ENCODE measurements at regions of chr21 and their contacts with region 1.

Region 1: GRCh38 chr21:42258153-42258884 is 39.4 kb downstream of the ABCG1 start:
- DNase-seq: peak; percentile 67 to 88 (median 88)
- ATAC-seq: peak; percentile 27 to 39
- H3K4me3 ChIP-seq: no peak overlapping the region
- H3K27ac ChIP-seq: no peak overlapping the region
- H3K4me1 ChIP-seq: peaks cover 2% of the 10 kb centered on the region
- H3K27me3 ChIP-seq: no peaks in the 10 kb centered on the region

Region 2: DNA sequence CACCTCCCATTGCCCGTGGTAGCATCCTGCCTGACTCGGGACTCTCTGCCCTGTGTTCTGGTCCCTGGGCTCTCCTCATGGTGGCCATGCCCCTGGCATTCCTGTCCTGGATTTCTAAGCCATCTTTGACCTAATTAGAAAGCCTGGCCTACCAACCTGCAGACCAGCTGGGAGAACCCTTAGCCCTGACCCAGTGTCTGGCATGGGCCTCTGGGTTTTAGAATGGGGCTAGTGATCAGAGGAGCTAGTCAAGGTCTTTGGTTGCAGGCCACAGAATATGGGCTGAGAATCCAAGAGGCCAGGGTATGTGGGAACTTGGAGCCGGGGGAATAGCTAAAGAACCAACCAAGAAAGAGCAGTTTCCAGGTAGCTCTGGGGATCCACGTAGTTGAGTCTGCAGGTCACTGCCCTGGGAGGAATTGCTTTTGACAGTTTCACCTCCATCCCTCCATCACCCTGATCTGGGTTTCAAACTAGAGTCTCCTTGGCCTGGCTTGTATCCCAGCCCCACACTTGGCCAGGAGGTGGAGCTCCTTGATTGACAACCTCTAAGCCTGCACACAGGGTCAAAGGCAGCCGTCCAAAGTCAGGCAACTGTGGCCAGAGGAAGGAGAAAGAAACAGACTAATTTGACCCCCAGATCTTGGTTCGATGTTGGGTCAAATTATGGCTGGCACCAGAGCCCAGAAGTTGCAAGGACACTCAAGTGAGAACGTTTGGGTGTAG is 94.1 kb before region 1 on chr21:
- intact Hi-C with region 1: loop called in 2 of 4 experiments (anchors 10 kb)
- DNase-seq: peak; percentile 56 to 79 (median 77)
- ATAC-seq: peak; percentile 68 to 76
- H3K4me3 ChIP-seq: no peak overlapping the region
- H3K27ac ChIP-seq: no peak overlapping the region
- H3K4me1 ChIP-seq: no peaks in the 10 kb centered on the region
- H3K27me3 ChIP-seq: no peaks in the 10 kb centered on the region

Region 3: GRCh38 chr21:42187976-42188653 is 70.2 kb before region 1 on chr21:
- intact Hi-C with region 1: no loop called
- DNase-seq: peak in 1 of 3 donors; percentile 78
- ATAC-seq: peak; percentile 76 to 78
- H3K4me3 ChIP-seq: no peak overlapping the region
- H3K27ac ChIP-seq: peak overlapping the region; percentile 51
- H3K4me1 ChIP-seq: peaks cover 3% of the 10 kb centered on the region
- H3K27me3 ChIP-seq: no peaks in the 10 kb centered on the region

Measured in right cardiac atrium (tissue), 5 donors.